ENCODE measurements at regions of chr14 and their contacts with region 1.

Region 1: GRCh38 chr14:35883677-35884293 is 57.6 kb downstream of the BRMS1L start:
- DNase-seq: peak; percentile 45
- ATAC-seq: peak; percentile 42
- H3K4me3 Mint-ChIP-seq: no peak overlapping the region
- H3K27ac Mint-ChIP-seq: no peak overlapping the region
- H3K4me1 Mint-ChIP-seq: peaks cover 5% of the 10 kb centered on the region
- H3K27me3 Mint-ChIP-seq: peaks cover 14% of the 10 kb centered on the region

Region 2: GRCh38 chr14:35944847-35945246 is 61.1 kb after region 1 on chr14:
- CTCF ChIA-PET with region 1: interaction called, 10 read pairs
- DNase-seq: peak; percentile 52
- ATAC-seq: no peak
- H3K4me3 Mint-ChIP-seq: no peak overlapping the region
- H3K27ac Mint-ChIP-seq: no peak overlapping the region
- H3K4me1 Mint-ChIP-seq: peaks cover 9% of the 10 kb centered on the region
- H3K27me3 Mint-ChIP-seq: no peaks in the 10 kb centered on the region

Region 3: DNA sequence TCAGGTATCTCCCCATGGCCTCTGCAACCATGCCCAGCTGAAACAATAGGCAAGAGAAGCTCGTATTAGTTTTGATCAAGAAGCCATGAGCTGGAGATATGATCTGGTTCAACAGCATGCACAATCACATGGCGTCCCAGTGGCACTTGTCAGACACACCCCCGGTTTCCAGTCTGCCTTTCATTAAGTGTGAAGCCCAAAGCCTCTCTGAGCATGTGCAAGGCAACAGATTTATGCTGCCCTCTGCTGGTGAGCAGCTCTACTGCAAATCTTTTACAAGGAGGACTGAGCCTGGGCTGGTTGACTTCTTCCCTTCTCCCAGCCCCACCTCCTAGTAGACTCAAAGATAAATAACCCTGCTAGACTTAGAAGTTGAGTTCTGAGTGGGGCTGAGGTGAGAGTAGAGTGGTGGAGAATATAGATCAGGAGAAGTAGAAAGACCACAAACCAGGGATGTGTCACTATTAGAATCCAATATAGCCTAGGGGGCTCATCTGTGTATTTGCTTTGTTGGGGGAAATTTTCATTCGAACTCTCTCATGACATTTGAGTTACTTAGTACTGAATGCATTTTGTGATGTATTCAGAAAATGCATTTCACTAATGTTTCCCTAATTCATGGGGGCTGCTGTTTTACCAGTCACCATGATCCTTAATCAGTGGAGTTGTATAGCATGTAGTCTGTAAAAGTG is 490.3 kb after region 1 on chr14:
- CTCF ChIA-PET with region 1: interaction called, 10 read pairs
- DNase-seq: peak; percentile 79
- ATAC-seq: peak; percentile 78
- H3K4me3 Mint-ChIP-seq: no peak overlapping the region
- H3K27ac Mint-ChIP-seq: no peak overlapping the region
- H3K4me1 Mint-ChIP-seq: no peaks in the 10 kb centered on the region
- H3K27me3 Mint-ChIP-seq: peaks cover 9% of the 10 kb centered on the region

Measured in activated CD8-positive, alpha-beta memory T cell treated with anti-CD3 and anti-CD28 coated beads, Interleukin-2, amount 10 ng/mL, durations not matched to agents 7 days and 5 days (primary cell).